ENCODE measurements at regions of chr11 and their contacts with region 1.

Region 1: DNA sequence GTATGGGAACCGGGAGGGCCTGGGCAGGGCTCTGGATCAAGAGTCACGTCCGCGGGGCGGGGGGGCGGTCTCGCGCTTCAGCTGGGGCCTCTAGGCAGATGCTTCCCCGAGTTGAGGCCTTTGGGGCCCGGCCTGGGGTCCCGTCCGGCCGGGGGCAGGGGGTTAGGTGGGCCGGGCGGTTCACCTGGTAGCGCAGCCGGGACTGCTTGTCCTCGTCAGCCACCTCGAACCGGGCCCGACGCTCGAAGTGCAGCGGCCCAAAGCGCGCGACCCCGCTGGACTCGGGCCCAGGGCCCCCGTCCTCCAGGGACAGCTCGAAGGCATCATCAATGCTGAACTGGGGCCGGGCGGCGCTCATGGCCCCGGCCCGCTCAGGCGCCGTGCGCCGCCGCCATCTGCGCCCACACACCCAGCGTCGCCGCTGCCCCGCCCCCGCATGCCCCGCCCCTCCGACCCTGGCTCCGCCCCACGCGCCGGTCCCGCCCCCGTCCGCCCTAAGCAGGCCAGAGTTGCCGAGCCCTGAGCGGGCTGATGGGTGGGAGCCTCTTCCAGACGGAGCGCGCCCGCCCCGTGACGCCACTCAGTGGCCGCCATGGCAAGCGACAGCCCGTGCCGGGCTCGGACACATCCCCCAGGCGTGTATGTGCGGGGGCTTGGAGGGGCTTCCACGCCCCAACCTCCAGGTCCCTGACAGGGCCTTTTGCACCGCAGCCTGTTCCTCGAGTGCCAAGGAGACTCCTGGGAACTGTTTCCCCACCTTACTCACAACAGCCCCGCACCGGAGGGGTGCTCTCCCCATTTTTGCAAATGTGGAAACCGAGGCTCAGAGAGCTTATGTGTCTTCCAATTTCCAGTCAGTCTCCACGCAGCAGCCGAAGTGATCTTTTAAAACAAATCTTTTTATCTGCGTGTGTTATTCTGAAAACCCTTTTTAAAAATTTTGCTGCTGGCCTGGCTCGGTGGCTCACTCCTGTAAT is at the start of gene TMEM134:
- DNase-seq: peak; percentile 88 to 94
- ATAC-seq: peak; percentile 84 to 94 (median 84)
- H3K4me3 ChIP-seq: peak within 1 kb of the TSS; percentile 66
- H3K4me3 Mint-ChIP-seq: peak within 1 kb of the TSS; percentile 85
- H3K27ac ChIP-seq: peak within 1 kb of the TSS; percentile 89
- H3K27ac Mint-ChIP-seq: peak within 1 kb of the TSS; percentile 78 to 82
- H3K4me1 ChIP-seq: peaks cover 36% of the 10 kb centered on the region
- H3K4me1 Mint-ChIP-seq: peaks cover 12 to 36% of the 10 kb centered on the region in 2 donors
- H3K27me3 ChIP-seq: no peaks in the 10 kb centered on the region
- H3K27me3 Mint-ChIP-seq: no peaks in the 10 kb centered on the region
- CTCF ChIP-seq: no peak
- total RNA-seq, gene TMEM134: 57.8 to 65.7 (median 61.2) TPM

Region 2: GRCh38 chr11:67428052-67428914 is 40.8 kb before region 1 on chr11 and contains the start of gene RPS6KB2:
- intact Hi-C with region 1: loop called (anchors 5 kb)
- DNase-seq: peak; percentile 99 to 100
- ATAC-seq: peak; percentile 90 to 96 (median 91)
- H3K4me3 ChIP-seq: peak within 1 kb of the TSS; percentile 74
- H3K4me3 Mint-ChIP-seq: peak within 1 kb of the TSS; percentile 93
- H3K27ac ChIP-seq: peak within 1 kb of the TSS; percentile 83
- H3K27ac Mint-ChIP-seq: peak within 1 kb of the TSS; percentile 92 to 94
- H3K4me1 ChIP-seq: peaks cover 47% of the 10 kb centered on the region
- H3K4me1 Mint-ChIP-seq: peaks cover 29 to 31% of the 10 kb centered on the region in 2 donors
- H3K27me3 ChIP-seq: no peaks in the 10 kb centered on the region
- H3K27me3 Mint-ChIP-seq: no peaks in the 10 kb centered on the region
- CTCF ChIP-seq: no peak
- total RNA-seq, gene RPS6KB2: 81.0 to 89.6 (median 84.6) TPM

Region 3: DNA sequence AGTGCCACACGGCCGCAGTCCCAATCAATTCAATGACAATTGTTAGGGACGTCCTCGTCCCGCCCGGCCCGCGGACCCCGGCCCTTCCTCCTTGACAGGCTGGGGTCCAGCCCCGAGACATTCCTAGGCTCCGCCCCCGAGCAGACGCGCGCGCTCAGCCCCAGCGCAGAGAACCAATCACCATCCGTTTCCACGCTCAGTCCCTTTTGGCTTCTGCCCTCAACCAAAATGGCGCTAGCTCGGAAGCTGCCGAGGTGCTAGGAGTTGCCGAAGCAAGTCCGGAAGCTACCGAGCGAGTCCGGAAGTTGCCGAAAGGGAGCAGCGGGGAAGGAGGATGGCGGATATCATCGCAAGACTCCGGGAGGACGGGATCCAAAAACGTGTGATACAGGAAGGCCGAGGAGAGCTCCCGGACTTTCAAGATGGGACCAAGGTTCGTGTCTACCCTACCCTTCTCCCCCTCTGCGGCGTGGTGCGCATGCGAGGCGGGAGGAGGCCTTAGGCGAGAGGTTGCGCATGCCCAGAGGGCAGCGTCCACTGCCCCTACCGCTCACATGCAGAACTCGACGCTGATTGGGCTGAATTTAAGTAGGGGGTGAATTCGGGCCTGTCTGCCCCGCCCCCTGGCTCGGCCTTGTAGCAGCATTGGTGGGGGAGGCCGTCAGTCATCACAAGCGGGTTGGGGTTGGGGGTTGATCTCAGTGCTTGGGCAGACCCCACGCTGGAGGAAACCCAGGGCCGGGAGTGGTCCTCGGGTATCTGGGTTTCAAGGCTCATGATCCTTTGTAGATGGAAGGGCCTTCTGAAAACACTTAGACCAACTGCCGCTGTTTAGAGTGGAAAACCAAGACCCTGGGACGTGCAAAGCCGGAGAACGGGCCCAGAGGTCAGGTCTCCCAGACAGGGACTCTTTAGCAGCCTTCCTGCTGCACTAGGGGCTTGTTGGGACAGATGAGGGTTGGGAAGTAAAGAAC is 14.0 kb after region 1 on chr11 and contains the start of gene AIP:
- intact Hi-C with region 1: loop called (anchors 1 kb)
- DNase-seq: peak; percentile 95 to 99
- ATAC-seq: peak; percentile 86 to 96 (median 92)
- H3K4me3 ChIP-seq: peak within 1 kb of the TSS; percentile 48
- H3K4me3 Mint-ChIP-seq: peak within 1 kb of the TSS; percentile 99
- H3K27ac ChIP-seq: peak within 1 kb of the TSS; percentile 74
- H3K27ac Mint-ChIP-seq: peak within 1 kb of the TSS; percentile 97 to 98
- H3K4me1 ChIP-seq: peaks cover 55% of the 10 kb centered on the region
- H3K4me1 Mint-ChIP-seq: peaks cover 50 to 52% of the 10 kb centered on the region in 2 donors
- H3K27me3 ChIP-seq: no peaks in the 10 kb centered on the region
- H3K27me3 Mint-ChIP-seq: no peaks in the 10 kb centered on the region
- CTCF ChIP-seq: no peak
- total RNA-seq, gene AIP: 93.3 to 113 (median 98.1) TPM

Region 4: DNA sequence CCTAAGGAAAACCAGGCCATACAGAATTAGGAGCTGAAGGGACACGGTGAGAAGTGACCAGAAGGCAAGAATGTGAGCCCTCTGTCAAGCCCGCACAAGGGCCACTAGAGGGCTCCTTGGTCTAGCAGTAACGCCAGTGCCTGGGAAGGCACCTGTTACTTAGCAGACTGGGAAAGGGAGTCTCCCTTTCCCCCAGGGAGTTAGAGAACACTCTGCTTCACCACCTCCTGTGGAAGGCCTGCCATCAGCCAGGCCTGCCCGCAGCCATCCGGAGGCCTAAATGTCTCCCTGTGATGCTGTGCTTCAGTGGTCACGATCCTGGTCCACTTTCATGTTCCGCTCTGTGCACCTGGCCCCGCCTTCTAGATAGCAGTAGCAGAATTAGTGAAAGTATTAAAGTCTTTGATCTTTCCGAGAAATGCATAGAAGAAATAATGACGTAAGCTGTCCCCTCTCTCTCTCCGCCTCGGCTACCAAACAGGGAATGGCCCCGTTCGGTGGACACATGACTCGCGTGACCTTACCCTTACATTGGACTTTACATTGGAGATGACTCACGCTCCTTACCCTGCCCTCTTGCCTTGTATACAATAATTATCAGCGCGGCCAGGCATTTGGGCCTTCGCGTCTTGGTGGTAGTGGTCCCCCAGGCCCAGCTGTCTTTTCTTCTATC is 103.8 kb after region 1 on chr11:
- intact Hi-C with region 1: no loop called
- DNase-seq: peak; percentile 31 to 60
- ATAC-seq: peak in 2 of 3 donors; percentile 34 to 44
- H3K4me3 ChIP-seq: no peak overlapping the region
- H3K4me3 Mint-ChIP-seq: no peak overlapping the region
- H3K27ac ChIP-seq: no peak overlapping the region
- H3K27ac Mint-ChIP-seq: no peak overlapping the region
- H3K4me1 ChIP-seq: no peaks in the 10 kb centered on the region
- H3K4me1 Mint-ChIP-seq: peaks cover 0 to 5% of the 10 kb centered on the region in 2 donors
- H3K27me3 ChIP-seq: no peaks in the 10 kb centered on the region
- H3K27me3 Mint-ChIP-seq: peaks cover 0 to 6% of the 10 kb centered on the region in 2 donors
- CTCF ChIP-seq: peak; percentile 65

Measured in natural killer cell (primary cell).